ENCODE measurements at regions of chr19 and their contacts with region 1.

Region 1: DNA sequence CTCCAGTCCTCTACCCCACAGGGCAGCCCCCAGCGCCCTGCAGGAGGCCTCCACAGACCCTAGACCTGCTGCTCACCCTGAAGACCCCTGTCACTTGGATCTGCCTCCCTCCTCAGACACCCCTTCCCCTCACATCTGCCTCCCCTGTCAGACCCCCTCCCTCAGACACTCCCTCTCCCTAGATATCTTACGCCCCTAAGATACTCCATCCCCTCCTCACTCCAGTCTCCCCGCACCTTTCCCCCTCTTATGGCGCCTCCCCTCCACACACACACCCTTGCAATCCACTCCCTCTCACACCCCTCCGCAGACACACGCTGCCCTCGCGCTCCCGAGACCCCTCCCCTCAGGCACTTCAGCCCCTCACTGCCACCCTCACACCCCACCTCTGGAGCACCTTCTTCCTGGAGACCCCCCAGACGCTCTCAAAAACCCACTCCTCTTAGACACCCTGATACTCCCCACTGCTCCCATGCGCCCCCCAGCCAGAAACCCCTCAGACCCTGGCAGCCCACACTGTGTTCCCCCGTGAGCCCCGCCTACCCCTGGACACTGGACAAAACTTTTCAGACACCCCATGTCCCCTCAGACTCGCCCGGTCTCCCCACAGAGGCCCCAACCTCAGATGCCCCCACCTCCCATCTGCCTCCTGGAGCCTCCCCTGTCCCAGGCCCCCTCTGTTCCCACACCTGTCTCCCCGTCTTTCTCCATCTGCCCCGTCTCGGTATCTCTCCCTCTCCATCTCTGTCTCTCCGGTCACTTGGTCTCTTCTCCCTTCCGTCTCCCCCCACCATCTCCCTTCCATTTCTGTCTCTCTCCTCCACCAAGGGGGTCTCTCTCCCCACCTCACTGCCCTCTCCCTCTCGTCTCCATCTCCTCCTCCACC is 14.5 kb downstream of the ERFL start:
- DNase-seq: no peak
- ATAC-seq: no peak
- H3K4me3 ChIP-seq: no peak overlapping the region
- H3K4me3 Mint-ChIP-seq: peak overlapping the region; percentile 24
- H3K27ac ChIP-seq: no peak overlapping the region
- H3K27ac Mint-ChIP-seq: no peak overlapping the region
- H3K4me1 ChIP-seq: peaks cover 44 to 46% of the 10 kb centered on the region in 2 donors
- H3K4me1 Mint-ChIP-seq: peaks cover 38% of the 10 kb centered on the region
- H3K27me3 ChIP-seq: peaks cover 0 to 63% (median 39%) of the 10 kb centered on the region in 4 experiments
- H3K27me3 Mint-ChIP-seq: peaks cover 18% of the 10 kb centered on the region
- CTCF ChIP-seq: no peak

Region 2: DNA sequence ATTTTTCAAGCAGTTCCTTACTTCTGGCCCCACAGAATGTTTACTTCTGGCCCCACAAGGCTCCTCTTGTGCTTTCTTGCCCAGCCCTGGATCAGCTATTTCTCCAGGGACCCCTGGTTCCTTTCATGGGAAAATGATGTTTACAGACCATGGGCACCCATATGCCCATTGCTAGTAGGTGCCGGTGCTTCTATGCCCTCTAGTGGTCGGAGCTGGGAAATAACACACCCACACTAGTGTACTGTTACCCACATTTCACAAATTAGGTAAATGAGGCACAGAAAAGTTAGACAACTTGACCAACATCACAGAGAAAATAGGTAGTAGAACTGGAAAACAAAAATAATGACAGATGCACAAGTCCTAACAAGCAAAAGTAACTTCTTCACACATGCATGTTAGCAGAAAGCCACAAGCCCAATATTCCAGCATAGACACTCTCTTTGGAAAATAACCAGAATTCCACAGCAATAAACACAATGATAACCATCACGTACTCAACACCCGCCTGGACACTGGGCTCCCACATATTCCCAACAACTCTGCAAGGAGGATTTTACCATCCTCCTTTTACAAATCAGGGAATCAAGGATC is 159.7 kb before region 1 on chr19:
- CTCF ChIA-PET with region 1: no interaction called
- POLR2A ChIA-PET with region 1: no interaction called
- intact Hi-C with region 1: no loop called
- DNase-seq: peak; percentile 76
- ATAC-seq: peak; percentile 94
- H3K4me3 ChIP-seq: no peak overlapping the region
- H3K4me3 Mint-ChIP-seq: no peak overlapping the region
- H3K27ac ChIP-seq: no peak overlapping the region
- H3K27ac Mint-ChIP-seq: no peak overlapping the region
- H3K4me1 ChIP-seq: peaks cover 0 to 8% of the 10 kb centered on the region in 2 donors
- H3K4me1 Mint-ChIP-seq: peaks cover 1% of the 10 kb centered on the region
- H3K27me3 ChIP-seq: peaks cover 0 to 7% (median 0%) of the 10 kb centered on the region in 4 experiments
- H3K27me3 Mint-ChIP-seq: peaks cover 11% of the 10 kb centered on the region
- CTCF ChIP-seq: peak; percentile 76

Region 3: GRCh38 chr19:41928221-41928683 is 14.5 kb after region 1 on chr19 and contains the start of gene ERFL:
- CTCF ChIA-PET with region 1: interaction called, 6 read pairs
- POLR2A ChIA-PET with region 1: no interaction called
- intact Hi-C with region 1: loop called (anchors 2 kb)
- DNase-seq: peak; percentile 59
- ATAC-seq: peak; percentile 31
- H3K4me3 ChIP-seq: peak within 1 kb of the TSS; percentile 49 to 72 (median 60)
- H3K4me3 Mint-ChIP-seq: no peak within 1 kb of the TSS
- H3K27ac ChIP-seq: peak within 1 kb of the TSS; percentile 18 to 56
- H3K27ac Mint-ChIP-seq: peak within 1 kb of the TSS; percentile 87
- H3K4me1 ChIP-seq: peaks cover 52 to 60% of the 10 kb centered on the region in 2 donors
- H3K4me1 Mint-ChIP-seq: peaks cover 32% of the 10 kb centered on the region
- H3K27me3 ChIP-seq: peaks cover 0 to 36% (median 7%) of the 10 kb centered on the region in 4 experiments
- H3K27me3 Mint-ChIP-seq: peaks cover 7% of the 10 kb centered on the region
- CTCF ChIP-seq: no peak
- total RNA-seq, gene ERFL: 2.3 and 2.4 TPM in 2 replicates

Measured in B cell (primary cell).